ENCODE measurements at regions of chr7 and their contacts with region 1.

Region 1: GRCh38 chr7:80659120-80660055 is 20.9 kb downstream of the CD36 start:
- DNase-seq: peak; percentile 44
- H3K4me3 ChIP-seq: no peak overlapping the region
- H3K27ac ChIP-seq: no peak overlapping the region
- H3K4me1 ChIP-seq: no peaks in the 10 kb centered on the region
- H3K27me3 ChIP-seq: no peaks in the 10 kb centered on the region
- CTCF ChIP-seq: peak; percentile 36 to 45
- POLR2A ChIP-seq: no peak

Region 2: DNA sequence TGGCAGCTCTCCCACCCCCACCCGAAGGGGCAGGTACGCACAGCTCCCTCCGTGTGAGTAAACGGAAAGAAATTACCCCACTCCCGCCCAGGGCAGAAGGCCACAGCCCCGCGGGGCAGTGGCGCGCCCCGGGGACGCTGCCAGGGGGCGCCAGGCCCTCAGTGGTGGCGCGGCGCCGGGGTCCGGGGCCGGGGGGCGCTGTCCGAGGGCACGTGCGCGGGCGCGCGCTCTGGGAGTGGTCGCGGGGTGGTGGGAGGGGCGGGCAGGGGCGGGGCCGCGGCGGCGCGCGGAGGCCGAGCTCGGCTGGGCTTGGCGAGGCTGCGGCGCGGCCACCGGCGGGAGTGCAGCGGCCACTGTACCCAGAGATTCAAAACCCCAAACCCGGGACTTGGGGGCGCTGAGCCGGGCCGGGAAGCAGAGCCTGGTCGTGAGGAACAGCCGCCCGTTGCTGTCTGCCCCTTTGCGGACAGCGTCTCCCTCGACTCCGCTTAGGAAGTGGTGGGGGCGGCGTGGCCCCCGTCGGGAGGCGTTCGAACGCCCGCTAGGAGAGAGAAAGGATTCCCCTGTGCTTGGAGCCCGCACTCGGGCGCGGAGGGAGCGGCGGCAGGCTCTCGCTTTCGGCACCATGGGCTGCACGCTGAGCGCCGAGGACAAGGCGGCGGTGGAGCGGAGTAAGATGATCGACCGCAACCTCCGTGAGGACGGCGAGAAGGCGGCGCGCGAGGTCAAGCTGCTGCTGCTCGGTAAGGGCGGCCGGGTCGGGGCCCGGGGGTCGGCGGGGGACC is 524.7 kb before region 1 on chr7 and contains the start of gene GNAI1:
- CTCF ChIA-PET with region 1: interaction called, 3 read pairs
- POLR2A ChIA-PET with region 1: no interaction called
- dilution Hi-C with region 1: no loop called
- intact Hi-C with region 1: loop called (anchors 2 kb)
- DNase-seq: peak; percentile 65
- H3K4me3 ChIP-seq: peak within 1 kb of the TSS; percentile 88 to 94 (median 91)
- H3K27ac ChIP-seq: peak within 1 kb of the TSS; percentile 54
- H3K4me1 ChIP-seq: peaks cover 17% of the 10 kb centered on the region
- H3K27me3 ChIP-seq: peaks cover 0 to 1% of the 10 kb centered on the region in 2 experiments
- CTCF ChIP-seq: peak; percentile 30 to 49
- POLR2A ChIP-seq: peak; percentile 70
- total RNA-seq, gene GNAI1: 15.0 and 19.7 TPM in 2 replicates

Region 3: DNA sequence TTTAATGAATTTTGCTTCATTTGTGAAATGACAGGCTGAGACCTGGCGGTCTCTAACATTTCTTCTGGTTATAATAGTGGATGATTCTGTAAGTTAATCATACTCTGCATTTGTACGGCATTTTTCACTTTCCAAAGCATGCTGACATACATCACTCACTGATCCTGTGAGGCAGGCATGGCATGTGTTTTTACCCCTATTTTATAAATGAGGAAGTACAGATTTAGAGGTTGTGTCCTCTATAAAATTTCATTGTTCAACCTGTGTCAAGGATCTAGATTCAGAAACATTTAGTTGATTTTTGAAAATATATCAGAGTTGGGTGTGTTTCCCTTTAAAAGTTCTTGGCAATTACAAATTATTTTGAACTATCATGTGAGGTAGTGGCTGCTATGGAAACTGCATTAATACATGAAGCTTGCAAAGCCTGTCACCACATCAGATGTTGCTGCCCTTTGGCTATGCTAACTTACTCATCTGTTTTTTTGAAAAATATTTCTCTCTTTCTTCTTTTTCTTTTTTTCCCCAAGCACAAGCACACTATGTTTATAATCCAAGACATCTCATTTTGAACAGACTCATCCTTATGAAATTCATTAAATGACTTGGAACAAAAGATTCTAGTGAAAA is 352.0 kb before region 1 on chr7:
- CTCF ChIA-PET with region 1: no interaction called
- POLR2A ChIA-PET with region 1: no interaction called
- dilution Hi-C with region 1: no loop called
- intact Hi-C with region 1: no loop called
- DNase-seq: no peak
- H3K4me3 ChIP-seq: no peak overlapping the region
- H3K27ac ChIP-seq: no peak overlapping the region
- H3K4me1 ChIP-seq: peaks cover 23% of the 10 kb centered on the region
- H3K27me3 ChIP-seq: no peaks in the 10 kb centered on the region
- CTCF ChIP-seq: no peak
- POLR2A ChIP-seq: no peak

Region 4: DNA sequence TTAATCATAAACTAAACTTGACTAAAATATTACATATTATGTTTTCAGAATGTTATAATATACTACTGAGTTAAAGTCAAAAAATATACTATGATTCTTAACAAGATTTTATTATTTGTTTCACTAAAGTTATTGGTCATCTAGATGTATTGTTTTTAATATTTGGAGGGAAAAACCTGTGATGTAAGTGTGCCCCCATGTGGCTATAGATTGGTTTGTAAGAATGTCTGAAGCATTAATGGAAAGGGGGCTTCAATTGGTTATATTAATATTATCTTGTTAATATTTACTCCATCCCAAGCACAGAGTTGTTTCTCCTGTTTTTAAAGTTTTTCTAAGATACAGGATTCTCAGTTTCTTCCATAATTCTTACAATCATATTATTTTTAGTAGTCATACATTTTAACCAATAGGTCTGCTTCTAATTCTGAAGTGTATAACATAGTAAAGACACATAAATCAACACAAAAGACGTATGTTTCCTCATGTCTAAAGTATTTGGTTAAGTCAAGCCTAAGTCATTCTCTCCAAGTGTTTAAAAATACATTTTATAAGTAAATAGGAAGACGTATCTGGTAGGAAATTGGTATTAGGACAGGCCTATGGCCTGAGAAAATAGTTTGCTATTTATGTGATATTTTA is 205.6 kb before region 1 on chr7:
- CTCF ChIA-PET with region 1: interaction called, 10 read pairs
- POLR2A ChIA-PET with region 1: no interaction called
- dilution Hi-C with region 1: no loop called
- intact Hi-C with region 1: loop called (anchors 5 kb)
- DNase-seq: peak; percentile 59
- H3K4me3 ChIP-seq: no peak overlapping the region
- H3K27ac ChIP-seq: no peak overlapping the region
- H3K4me1 ChIP-seq: no peaks in the 10 kb centered on the region
- H3K27me3 ChIP-seq: no peaks in the 10 kb centered on the region
- CTCF ChIP-seq: peak in 1 of 2 donors; percentile 29
- POLR2A ChIP-seq: no peak

Region 5: DNA sequence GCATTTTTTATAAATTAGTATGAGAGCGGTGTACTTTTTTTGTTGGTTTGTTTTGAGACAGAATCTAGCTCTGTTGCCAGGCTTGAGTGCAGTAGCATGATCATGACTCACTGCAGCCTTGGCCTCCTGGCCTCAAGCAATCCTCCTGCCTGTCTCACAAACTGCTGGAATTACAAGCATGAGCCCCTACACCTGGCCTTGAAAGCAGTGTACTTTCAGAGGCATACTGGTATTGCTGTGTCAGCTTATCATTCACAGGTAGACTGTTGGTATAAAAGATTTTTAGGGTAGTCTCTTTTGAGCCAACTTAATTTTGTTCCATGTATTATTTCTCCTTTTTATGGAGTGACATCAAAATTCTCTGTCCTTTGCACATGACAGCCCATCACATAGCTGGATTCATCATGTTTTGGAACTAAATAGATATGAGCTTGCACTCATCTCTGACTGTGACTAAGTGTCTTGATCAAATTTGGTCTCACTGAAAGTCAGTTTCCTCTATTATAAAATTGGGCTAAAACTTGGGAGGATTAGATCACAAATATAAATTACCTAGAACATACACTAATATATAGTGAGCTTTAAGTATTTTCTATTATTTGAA is 159.9 kb before region 1 on chr7:
- CTCF ChIA-PET with region 1: no interaction called
- POLR2A ChIA-PET with region 1: no interaction called
- dilution Hi-C with region 1: no loop called
- intact Hi-C with region 1: loop called (anchors 5 kb)
- DNase-seq: peak; percentile 61
- H3K4me3 ChIP-seq: no peak overlapping the region
- H3K27ac ChIP-seq: peak overlapping the region; percentile 53
- H3K4me1 ChIP-seq: peaks cover 13% of the 10 kb centered on the region
- H3K27me3 ChIP-seq: no peaks in the 10 kb centered on the region
- CTCF ChIP-seq: no peak
- POLR2A ChIP-seq: no peak

Region 6: DNA sequence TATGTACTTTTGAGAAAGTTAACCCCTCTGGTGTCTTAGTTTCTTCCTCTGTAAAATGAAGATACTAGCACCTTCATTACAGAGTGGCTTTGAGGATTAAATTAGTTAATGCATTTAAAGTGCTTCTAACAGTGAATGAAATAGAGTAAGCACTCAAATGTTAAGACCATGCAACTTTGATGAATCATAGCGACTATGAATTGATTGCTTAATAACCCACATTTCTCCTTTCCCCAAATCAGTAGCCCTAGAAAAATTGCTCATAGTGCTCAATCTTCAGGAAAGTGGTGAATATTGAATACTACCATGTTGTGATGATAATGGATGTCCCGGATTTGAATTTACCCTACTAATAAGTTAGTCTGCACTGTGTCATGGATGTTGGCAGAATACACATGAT is 27.2 kb after region 1 on chr7:
- CTCF ChIA-PET with region 1: no interaction called
- POLR2A ChIA-PET with region 1: no interaction called
- dilution Hi-C with region 1: no loop called
- intact Hi-C with region 1: no loop called
- DNase-seq: no peak
- H3K4me3 ChIP-seq: no peak overlapping the region
- H3K27ac ChIP-seq: no peak overlapping the region
- H3K4me1 ChIP-seq: no peaks in the 10 kb centered on the region
- H3K27me3 ChIP-seq: peaks cover 3% of the 10 kb centered on the region in 2 experiments
- CTCF ChIP-seq: no peak
- POLR2A ChIP-seq: no peak

Region 7: DNA sequence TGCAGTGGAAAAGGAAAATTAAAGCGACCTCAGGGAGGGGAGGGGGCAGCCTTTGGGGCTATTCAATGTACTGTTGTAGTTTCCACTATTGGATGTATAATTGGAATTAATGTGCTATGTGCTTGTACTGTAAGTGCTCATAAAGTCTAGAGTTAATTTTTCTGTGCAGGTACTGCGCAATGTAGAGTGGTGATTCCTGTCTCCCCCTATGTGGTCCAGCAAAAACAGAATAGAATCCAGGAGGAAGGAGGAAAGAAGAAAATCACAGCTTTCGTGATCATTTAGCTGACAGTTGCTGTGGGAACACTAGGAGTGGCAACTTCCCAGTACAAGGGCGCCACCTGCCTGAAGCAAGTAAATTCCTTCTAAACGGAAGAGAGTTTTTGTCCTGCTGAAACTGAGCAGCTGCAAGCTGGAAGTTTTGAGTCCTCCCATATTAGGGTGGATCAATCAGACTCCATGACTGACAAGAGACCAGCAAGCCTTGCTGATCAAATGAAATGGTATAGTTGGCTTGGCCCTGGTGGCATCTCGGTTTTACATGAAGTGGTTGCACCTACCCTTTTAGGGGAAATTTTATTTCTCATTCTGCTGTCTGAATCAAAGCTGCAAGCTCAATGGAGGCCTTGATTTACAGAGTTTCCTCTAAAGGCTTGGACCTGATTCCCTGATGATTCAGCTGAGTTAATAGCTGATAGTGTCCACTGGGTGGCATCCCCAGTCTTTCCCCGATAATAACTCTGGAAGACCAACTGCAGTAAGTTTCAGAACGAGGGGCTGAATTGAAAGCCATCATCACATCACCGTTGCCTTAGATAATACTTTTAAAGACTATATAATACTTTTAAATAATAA is 810.7 kb after region 1 on chr7:
- CTCF ChIA-PET with region 1: interaction called, 21 read pairs
- POLR2A ChIA-PET with region 1: no interaction called
- dilution Hi-C with region 1: no loop called
- intact Hi-C with region 1: no loop called
- DNase-seq: peak; percentile 54
- H3K4me3 ChIP-seq: no peak overlapping the region
- H3K27ac ChIP-seq: no peak overlapping the region
- H3K4me1 ChIP-seq: no peaks in the 10 kb centered on the region
- H3K27me3 ChIP-seq: peaks cover 7% of the 10 kb centered on the region in 2 experiments
- CTCF ChIP-seq: peak; percentile 62 to 70
- POLR2A ChIP-seq: no peak